ENCODE measurements at regions of chr5 and their contacts with region 1.

Region 1: DNA sequence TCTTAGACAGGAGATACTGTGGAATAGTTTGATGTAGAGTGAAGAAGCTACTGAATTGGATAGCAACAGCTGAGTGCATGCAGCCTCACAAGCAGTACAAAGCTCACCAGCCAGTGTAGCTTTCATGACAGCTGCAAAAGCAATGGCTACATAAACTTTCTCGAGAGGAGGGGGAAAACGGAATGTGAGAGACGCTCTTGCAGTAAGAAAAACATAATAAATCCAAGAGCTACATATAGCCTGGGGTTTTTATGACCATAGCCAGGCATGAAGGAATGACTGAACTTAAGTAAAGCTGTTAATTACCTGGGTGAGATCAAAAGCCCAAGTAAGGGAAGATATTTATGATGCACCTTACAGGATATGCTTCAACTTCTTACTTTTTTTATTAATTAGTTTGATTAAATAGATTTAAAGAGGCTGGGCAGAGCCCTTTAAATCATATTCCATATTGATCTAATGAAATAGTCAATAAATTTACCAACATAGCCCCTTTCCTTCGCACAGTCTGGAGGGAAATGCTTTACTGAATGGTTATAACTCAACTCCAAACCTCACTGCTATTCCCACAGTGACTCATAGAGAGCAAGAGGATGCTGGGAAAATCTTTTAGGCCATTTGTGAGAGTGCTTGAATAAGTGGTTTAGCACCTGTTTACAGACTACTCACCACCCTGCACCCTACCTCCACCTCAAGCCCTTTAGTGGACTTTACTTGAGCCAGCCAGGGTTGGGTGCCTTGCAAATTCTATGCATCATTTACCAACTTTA is 407.2 kb upstream of the CLINT1 start:
- DNase-seq: no peak
- CTCF ChIP-seq: no peak

Region 2: DNA sequence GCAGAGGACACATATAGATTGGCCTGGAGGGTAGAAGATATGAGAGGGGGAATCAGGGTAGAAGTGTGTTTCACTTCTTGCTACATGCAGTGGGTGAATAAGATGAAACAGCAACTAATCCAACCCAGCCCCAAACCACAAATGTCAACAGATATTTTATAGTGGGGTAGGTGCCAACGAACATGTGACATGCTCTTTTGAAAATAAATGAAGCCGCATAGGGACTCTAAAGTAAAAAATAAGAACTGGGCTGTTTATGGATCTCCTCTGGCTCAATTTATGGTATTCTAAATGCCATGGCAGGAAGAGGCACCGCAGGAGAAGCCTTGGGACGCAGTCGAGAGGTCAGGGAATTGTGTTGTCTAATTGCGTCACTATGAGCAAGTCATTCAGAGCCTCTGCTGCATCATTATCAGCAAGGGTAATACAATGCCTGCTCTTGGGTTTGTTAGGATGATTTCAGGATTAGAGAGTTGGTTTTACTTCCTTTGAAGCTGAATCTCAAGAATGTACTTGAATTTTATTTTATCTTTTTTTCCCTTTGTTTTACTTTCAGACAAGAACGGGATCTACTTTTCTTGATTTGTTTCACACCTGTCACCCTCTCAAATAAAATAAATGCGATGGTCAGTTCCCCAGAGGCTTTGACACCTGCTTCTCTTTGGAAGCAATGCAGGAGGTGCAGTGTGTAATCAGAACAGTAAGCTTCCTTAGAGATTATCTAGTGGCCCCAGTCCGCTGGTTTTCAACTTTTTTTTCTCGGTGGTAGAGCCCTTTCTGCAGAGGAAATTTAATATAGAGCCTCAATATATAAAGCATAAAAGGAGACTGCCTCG is 31.6 kb before region 1 on chr5:
- CTCF ChIA-PET with region 1: no interaction called
- POLR2A ChIA-PET with region 1: no interaction called
- DNase-seq: no peak
- CTCF ChIP-seq: no peak

Region 3: GRCh38 chr5:158255609-158256008 is 10.5 kb before region 1 on chr5:
- CTCF ChIA-PET with region 1: interaction called, 15 read pairs
- POLR2A ChIA-PET with region 1: no interaction called
- DNase-seq: no peak
- CTCF ChIP-seq: no peak

Region 4: DNA sequence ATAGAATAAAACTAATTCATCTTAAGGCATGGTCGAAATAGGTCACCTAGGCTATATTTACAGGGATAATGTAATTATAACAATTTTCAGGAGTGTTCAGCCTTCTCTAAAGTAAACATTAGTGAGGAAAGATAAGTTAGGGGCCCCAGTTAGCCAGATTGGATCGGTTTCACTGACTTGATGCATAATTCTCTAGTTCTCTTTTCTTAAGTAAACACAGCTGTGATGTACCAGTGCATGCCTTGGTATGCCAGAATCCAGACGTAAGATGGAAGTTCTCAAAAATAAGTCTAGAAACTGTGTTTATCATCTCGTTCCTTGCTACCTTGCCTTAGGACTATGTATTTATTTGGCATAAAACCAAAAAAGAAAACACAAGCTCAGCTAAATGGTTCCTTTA is 35.0 kb after region 1 on chr5:
- CTCF ChIA-PET with region 1: no interaction called
- POLR2A ChIA-PET with region 1: no interaction called
- DNase-seq: no peak
- CTCF ChIP-seq: no peak

Region 5: GRCh38 chr5:158313733-158314464 is 47.8 kb after region 1 on chr5:
- CTCF ChIA-PET with region 1: no interaction called
- POLR2A ChIA-PET with region 1: no interaction called
- DNase-seq: no peak
- CTCF ChIP-seq: no peak

Measured in GM10248 (cell line).